ENCODE measurements at regions of chr6 and their contacts with region 1.

Region 1: DNA sequence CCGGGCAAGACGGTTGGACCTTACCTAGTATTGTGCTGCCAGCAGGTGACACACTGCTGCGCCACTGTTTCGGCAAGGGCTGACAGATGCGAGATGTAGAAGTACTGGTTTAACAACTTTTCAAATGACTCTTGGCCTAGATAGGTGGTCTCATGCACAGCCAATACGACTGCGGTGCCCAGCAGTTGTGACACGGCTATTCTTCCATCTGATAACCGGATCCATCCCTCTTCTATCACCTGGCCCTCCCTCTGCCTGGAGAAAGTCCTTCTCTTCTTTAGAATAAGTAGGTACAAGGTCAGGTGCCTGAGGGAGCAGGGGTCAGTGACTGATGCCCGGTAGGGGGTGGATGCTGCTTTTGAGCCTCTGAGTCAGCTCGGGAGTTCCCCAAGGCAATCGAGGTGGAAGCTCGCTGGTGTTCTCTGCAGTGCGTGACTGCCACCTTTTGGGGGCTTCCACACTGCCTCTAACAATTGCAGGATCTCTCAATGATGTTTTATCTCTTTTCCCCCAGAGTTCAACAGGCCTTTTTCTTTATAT is 166.8 kb upstream of the GRIK2 start:
- DNase-seq: no peak
- ATAC-seq: peak; percentile 79
- H3K4me3 ChIP-seq: no peak overlapping the region
- H3K27ac ChIP-seq: no peak overlapping the region
- H3K4me1 ChIP-seq: no peaks in the 10 kb centered on the region
- H3K27me3 ChIP-seq: no peaks in the 10 kb centered on the region
- CTCF ChIP-seq: peak; percentile 19 to 54 (median 29); a peak in 4 of 6 replicates
- EP300 ChIP-seq: no peak
- POLR2A ChIP-seq: no peak
- RAD21 ChIP-seq: peak; percentile 47

Region 2: DNA sequence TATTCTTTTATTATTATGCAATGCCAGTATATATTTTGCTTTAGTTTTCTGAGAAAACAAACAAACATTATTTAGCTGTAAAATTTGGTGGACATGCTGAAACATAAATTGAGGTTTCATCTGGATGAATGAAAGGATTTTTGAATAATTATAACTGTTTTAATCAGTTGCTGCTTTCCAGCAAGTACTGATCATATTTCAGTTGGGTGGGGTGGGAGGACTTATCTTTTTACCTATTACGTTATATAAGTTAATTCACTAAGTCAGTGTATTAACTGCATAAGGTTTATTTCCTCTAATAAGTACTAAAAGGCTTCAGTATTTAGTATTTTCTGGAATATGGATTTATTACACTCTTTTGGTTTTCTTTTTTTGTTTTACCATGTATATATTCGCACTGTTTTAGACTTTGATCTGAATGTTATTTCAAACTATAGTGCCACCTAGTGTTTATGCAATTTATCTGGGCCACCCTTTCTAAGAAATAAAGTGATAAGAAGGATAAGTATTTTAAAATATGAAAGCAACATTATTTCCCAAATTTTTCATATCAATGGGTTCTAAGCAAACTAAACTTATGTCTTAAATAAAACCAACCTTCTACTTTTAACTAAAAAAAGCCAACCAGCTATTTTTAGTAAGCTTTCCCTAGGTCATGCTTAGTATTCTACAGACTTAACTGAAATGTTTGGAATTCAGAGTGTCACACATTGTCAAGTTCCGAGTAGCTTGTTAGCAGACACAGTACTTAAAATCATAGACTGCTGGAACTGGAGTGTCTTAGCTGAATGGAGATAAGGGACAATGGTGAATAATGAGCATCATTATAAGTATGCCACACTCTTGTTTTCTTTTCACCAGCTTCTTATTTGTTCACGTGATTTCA is 1127.3 kb before region 1 on chr6:
- CTCF ChIA-PET with region 1: no interaction called
- POLR2A ChIA-PET with region 1: no interaction called
- RAD21 ChIA-PET with region 1: no interaction called
- SMC1A ChIA-PET with region 1: no interaction called
- in situ Hi-C with region 1: no loop called
- intact Hi-C with region 1: loop called (anchors 10 kb)
- DNase-seq: no peak
- ATAC-seq: peak; percentile 66
- H3K4me3 ChIP-seq: no peak overlapping the region
- H3K27ac ChIP-seq: no peak overlapping the region
- H3K4me1 ChIP-seq: no peaks in the 10 kb centered on the region
- H3K27me3 ChIP-seq: no peaks in the 10 kb centered on the region
- CTCF ChIP-seq: peak in 2 of 3 experiments; percentile 23 to 45; a peak in 4 of 6 replicates
- EP300 ChIP-seq: no peak
- POLR2A ChIP-seq: no peak
- RAD21 ChIP-seq: peak; percentile 42; the same call in 1 of the 2 replicates

Region 3: DNA sequence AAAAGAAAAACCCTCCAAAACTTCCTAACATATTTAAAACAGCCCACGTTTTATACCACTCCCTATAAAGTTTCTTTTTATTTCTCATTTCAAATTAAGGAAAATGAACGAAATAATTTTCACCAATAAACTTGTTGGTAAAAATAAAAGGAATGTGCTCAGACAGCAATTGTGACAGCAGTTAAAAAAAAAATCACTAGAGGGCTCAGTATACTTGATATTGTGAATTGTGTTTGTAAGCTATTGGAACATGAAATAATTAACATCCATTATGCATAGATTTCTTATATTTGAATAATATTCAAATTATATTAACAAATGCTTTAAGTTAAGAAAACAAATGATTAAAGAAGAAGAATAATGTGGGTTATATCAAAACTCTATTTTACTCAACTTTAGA is 451.0 kb before region 1 on chr6:
- CTCF ChIA-PET with region 1: interaction called, 3 read pairs
- POLR2A ChIA-PET with region 1: no interaction called
- RAD21 ChIA-PET with region 1: no interaction called
- SMC1A ChIA-PET with region 1: no interaction called
- in situ Hi-C with region 1: no loop called
- intact Hi-C with region 1: loop called (anchors 10 kb)
- DNase-seq: no peak
- ATAC-seq: no peak
- H3K4me3 ChIP-seq: no peak overlapping the region
- H3K27ac ChIP-seq: no peak overlapping the region
- H3K4me1 ChIP-seq: no peaks in the 10 kb centered on the region
- H3K27me3 ChIP-seq: no peaks in the 10 kb centered on the region
- CTCF ChIP-seq: no peak; a peak in 1 of 6 replicates
- EP300 ChIP-seq: no peak
- POLR2A ChIP-seq: no peak
- RAD21 ChIP-seq: no peak

Region 4: DNA sequence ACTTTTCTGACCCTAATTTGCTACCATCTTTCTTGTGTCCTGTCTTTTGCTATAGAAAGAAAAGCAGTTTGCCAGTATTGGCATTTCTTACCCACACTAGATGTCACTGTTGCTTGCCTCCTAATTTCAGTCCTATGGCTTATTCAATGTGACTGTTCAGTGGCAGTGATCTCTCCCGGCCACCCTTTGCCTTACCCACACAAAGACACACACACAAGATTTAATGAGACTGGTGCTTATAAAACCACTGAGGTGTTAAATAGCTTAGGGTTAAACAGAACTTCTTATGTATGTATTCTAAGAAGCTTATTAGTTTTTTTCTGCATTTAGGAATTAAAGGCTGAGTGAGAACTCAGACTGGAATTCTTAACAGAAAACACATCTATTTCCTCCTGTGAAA is 112.0 kb before region 1 on chr6:
- CTCF ChIA-PET with region 1: interaction called, 14 read pairs
- POLR2A ChIA-PET with region 1: no interaction called
- RAD21 ChIA-PET with region 1: interaction called, 5 read pairs
- SMC1A ChIA-PET with region 1: interaction called, 5 read pairs
- in situ Hi-C with region 1: no loop called
- intact Hi-C with region 1: loop called (anchors 2 kb)
- DNase-seq: no peak
- ATAC-seq: peak; percentile 84
- H3K4me3 ChIP-seq: no peak overlapping the region
- H3K27ac ChIP-seq: no peak overlapping the region
- H3K4me1 ChIP-seq: no peaks in the 10 kb centered on the region
- H3K27me3 ChIP-seq: 0 out of 4 replicates have a peak, but pooled peaks cover 0 to 1% of the 10 kb centered on the region in 2 experiments
- CTCF ChIP-seq: peak; percentile 35 to 63 (median 44); a peak in 4 of 6 replicates
- EP300 ChIP-seq: no peak
- POLR2A ChIP-seq: no peak
- RAD21 ChIP-seq: peak; percentile 50

Region 5: DNA sequence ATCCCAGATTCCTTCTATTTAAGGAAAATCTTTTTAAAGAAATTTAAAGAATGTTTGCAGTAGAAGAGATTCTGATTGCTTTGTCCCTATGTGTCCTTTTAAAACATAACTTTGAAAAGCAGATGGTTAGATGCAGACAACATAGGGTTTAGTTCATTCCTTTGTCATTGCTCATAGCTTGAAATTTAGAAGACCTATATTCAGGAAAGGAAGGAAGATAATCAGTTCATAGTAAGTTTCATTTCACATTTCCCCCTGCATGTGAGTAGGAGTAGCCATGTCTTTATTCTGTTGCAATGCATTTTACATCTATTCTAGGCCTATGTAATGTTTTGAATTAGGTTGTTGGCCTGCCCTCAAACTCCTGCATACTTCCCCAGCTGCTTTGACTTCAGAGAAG is 31.1 kb before region 1 on chr6:
- CTCF ChIA-PET with region 1: no interaction called
- POLR2A ChIA-PET with region 1: no interaction called
- RAD21 ChIA-PET with region 1: no interaction called
- SMC1A ChIA-PET with region 1: no interaction called
- in situ Hi-C with region 1: no loop called
- intact Hi-C with region 1: no loop called
- DNase-seq: no peak
- ATAC-seq: no peak
- H3K4me3 ChIP-seq: no peak overlapping the region
- H3K27ac ChIP-seq: no peak overlapping the region
- H3K4me1 ChIP-seq: no peaks in the 10 kb centered on the region
- H3K27me3 ChIP-seq: no peaks in the 10 kb centered on the region
- CTCF ChIP-seq: no peak
- EP300 ChIP-seq: no peak
- POLR2A ChIP-seq: no peak
- RAD21 ChIP-seq: no peak

Region 6: DNA sequence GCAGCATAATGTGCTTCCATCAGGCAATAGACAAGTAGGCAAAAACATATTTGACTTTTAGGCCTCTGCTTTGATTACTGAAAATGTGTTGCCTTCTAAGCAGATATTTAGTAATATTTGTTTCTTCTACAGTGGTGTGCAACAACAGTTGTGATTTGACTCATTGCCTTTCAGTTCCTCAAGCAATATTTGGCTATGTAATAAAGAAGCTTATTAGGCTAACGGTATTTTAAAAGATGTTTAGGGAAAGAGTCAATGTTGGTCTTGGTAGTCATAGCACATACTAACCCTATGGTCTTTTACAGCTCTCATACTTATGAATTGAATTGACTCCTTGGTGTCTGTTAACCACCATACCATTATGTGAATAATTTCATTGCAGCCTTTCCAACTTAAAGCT is 290.9 kb after region 1 on chr6:
- CTCF ChIA-PET with region 1: no interaction called
- POLR2A ChIA-PET with region 1: no interaction called
- RAD21 ChIA-PET with region 1: no interaction called
- SMC1A ChIA-PET with region 1: no interaction called
- in situ Hi-C with region 1: no loop called
- intact Hi-C with region 1: no loop called
- DNase-seq: no peak
- ATAC-seq: peak; percentile 64
- H3K4me3 ChIP-seq: no peak overlapping the region
- H3K27ac ChIP-seq: no peak overlapping the region
- H3K4me1 ChIP-seq: no peaks in the 10 kb centered on the region
- H3K27me3 ChIP-seq: no peaks in the 10 kb centered on the region
- CTCF ChIP-seq: no peak
- EP300 ChIP-seq: peak; percentile 14 to 15; a peak in 1 of 4 replicates
- POLR2A ChIP-seq: no peak
- RAD21 ChIP-seq: no peak